Esophagus squamous epithelium (tissue), 5 donors: ENCODE measurements at regions of chr14 and their contacts with region 1.

Region 1: DNA sequence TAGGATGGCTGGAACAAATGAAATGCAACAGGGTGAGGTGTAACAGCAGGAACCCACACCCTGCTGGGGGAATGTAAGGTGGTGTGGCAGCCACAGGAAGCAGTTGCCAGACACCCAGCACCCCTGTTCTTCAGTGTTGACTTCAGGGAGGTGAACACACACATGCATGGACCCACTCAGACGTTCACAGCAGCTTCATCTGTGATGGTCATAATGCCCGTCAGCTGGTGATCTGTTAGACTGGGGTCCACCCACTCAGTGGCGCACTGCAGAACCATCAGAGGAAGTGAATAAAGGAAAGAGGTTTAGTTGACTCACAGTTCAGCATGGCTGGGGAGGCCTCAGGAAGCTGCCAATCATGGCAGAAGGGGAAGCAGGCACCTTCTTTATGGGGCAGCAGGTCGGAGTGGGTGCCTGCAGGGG is 22.7 kb upstream of the TEX22 start:
- DNase-seq: no peak
- H3K4me3 ChIP-seq: no peak overlapping the region
- H3K27ac ChIP-seq: no peak overlapping the region
- H3K4me1 ChIP-seq: peaks cover 0 to 16% (median 0%) of the 10 kb centered on the region in 3 donors
- H3K27me3 ChIP-seq: no peaks in the 10 kb centered on the region
- CTCF ChIP-seq: no peak
- POLR2A ChIP-seq: no peak

Region 2: GRCh38 chr14:105430535-105430934 is 54.9 kb after region 1 on chr14:
- intact Hi-C with region 1: no loop called
- DNase-seq: no peak
- H3K4me3 ChIP-seq: no peak overlapping the region
- H3K27ac ChIP-seq: peak overlapping the region in 3 of 4 donors; percentile 29 to 54 (median 50)
- H3K4me1 ChIP-seq: peaks cover 0 to 15% (median 9%) of the 10 kb centered on the region in 3 donors
- H3K27me3 ChIP-seq: no peaks in the 10 kb centered on the region
- CTCF ChIP-seq: no peak
- POLR2A ChIP-seq: no peak

Region 3: DNA sequence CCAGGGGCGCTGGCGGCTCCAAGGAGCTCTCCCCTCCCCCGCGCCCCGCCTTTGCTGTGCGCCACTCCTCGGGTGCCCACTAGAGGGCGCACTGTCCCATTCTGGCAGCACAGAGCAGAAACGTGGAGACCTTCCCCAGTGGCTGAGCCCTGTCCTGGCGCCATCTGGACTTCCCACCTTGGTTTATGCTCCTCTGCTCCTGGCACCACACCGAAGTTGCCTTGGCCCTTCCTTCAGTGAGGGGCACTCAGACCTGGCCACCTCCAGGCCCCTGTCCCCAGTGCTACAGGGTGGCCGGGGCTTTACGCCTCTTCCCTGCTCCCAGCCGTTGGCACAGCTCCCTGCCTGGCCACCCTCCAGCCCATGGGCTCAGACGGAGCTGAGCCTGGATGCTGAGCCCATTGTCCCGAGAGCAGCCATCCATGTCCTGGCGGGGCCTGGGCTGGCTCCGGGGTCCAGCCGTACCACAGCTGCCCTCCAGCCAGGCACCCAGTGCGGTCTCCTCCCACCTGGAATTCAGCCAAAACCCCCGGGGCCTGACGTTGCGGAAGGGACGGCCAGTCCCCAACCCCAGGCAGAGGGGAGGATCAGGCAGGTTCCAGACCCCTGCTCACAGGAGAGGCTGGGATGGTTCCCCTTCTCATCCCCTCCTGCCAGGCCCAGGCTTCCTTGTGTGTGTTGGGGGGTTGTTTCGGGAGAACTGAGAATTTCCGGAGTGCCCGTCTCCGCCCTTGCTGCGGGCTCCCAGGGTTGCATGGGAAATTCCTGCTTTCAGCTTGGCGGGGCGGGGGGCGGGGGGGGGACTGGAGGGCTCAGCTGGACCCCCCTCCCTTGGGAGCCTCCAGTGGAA is 105.5 kb after region 1 on chr14:
- intact Hi-C with region 1: loop called (anchors 10 kb)
- DNase-seq: no peak
- H3K4me3 ChIP-seq: peak overlapping the region; percentile 23 to 67 (median 39)
- H3K27ac ChIP-seq: peak overlapping the region; percentile 88 to 99 (median 93)
- H3K4me1 ChIP-seq: peaks cover 77 to 99% (median 81%) of the 10 kb centered on the region in 3 donors
- H3K27me3 ChIP-seq: peaks cover 0 to 20% (median 0%) of the 10 kb centered on the region in 4 donors
- CTCF ChIP-seq: peak; percentile 96 to 99 (median 99)
- POLR2A ChIP-seq: peak in 2 of 4 donors; percentile 25 to 38